ENCODE measurements at regions of chr6 and their contacts with region 1.

Region 1: GRCh38 chr6:42726485-42727086 is 4.2 kb upstream of the PRPH2 start:
- DNase-seq: peak; percentile 42 to 84
- ATAC-seq: peak; percentile 91 to 97 (median 95)
- H3K4me3 ChIP-seq: peak overlapping the region; percentile 3 to 66 (median 58)
- H3K27ac ChIP-seq: peak overlapping the region in 9 of 10 donors; percentile 34 to 88 (median 76)
- H3K4me1 ChIP-seq: peaks cover 4 to 20% (median 14%) of the 10 kb centered on the region in 9 donors
- H3K27me3 ChIP-seq: no peaks in the 10 kb centered on the region
- CTCF ChIP-seq: peak; percentile 82 to 98 (median 94)

Region 2: DNA sequence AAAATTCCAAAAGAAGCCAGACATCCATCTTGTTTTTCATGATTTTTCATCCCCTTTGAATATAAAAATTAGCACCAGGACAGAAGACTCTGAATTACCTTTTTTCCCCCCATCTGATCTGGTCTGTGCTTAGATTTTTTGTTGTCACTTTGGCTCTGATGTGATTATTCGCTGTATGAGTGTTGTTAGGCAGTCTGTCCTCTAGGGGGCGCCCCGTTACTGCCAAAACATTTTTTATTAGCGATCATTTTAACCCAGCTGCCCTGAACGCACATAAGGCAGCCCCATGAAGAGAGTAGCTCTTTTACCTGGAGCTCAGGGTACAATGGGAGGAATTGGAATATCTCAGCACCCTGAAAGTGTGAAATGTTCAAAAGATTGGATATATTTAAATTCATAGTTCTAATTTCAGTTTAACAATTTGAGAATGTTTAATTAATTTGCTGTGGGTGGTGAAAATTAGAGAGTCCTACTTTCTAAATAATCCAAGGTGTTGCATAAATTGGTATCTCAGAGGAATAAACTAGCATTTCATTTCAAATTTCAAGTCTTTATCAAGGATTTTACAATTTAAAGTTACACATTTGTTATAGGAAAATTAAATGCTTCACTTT is 64.9 kb before region 1 on chr6:
- intact Hi-C with region 1: loop called (anchors 1 to 10 kb)
- DNase-seq: peak; percentile 68 to 81
- ATAC-seq: peak in 7 of 8 donors; percentile 61 to 90 (median 82)
- H3K4me3 ChIP-seq: no peak overlapping the region
- H3K27ac ChIP-seq: no peak overlapping the region
- H3K4me1 ChIP-seq: no peaks in the 10 kb centered on the region
- H3K27me3 ChIP-seq: no peaks in the 10 kb centered on the region
- CTCF ChIP-seq: peak; percentile 81 to 95 (median 91)

Region 3: GRCh38 chr6:42692137-42692911 is 34.3 kb before region 1 on chr6:
- intact Hi-C with region 1: loop called in 2 of 10 experiments (anchors 5 kb)
- DNase-seq: no peak
- ATAC-seq: peak in 7 of 8 donors; percentile 35 to 68 (median 60)
- H3K4me3 ChIP-seq: no peak overlapping the region
- H3K27ac ChIP-seq: peak overlapping the region in 8 of 10 donors; percentile 16 to 66 (median 56)
- H3K4me1 ChIP-seq: peaks cover 0 to 50% (median 22%) of the 10 kb centered on the region in 9 donors
- H3K27me3 ChIP-seq: no peaks in the 10 kb centered on the region
- CTCF ChIP-seq: no peak

Region 4: GRCh38 chr6:42745707-42746462 is 19.3 kb after region 1 on chr6 and contains the start of gene TBCC:
- intact Hi-C with region 1: no loop called
- DNase-seq: peak; percentile 93 to 97
- ATAC-seq: peak; percentile 92 to 97 (median 94)
- H3K4me3 ChIP-seq: peak within 1 kb of the TSS; percentile 68 to 99 (median 96)
- H3K27ac ChIP-seq: peak within 1 kb of the TSS; percentile 84 to 98 (median 95)
- H3K4me1 ChIP-seq: peaks cover 5 to 38% (median 32%) of the 10 kb centered on the region in 9 donors
- H3K27me3 ChIP-seq: no peaks in the 10 kb centered on the region
- CTCF ChIP-seq: no peak
- total RNA-seq, gene TBCC: 9.8 to 16.1 (median 13.3) TPM

Region 5: GRCh38 chr6:42873313-42873712 is 146.7 kb after region 1 on chr6:
- intact Hi-C with region 1: loop called in 9 of 10 experiments (anchors 1 to 10 kb)
- DNase-seq: no peak
- ATAC-seq: no peak
- H3K4me3 ChIP-seq: no peak overlapping the region
- H3K27ac ChIP-seq: no peak overlapping the region
- H3K4me1 ChIP-seq: peaks cover 0 to 9% (median 0%) of the 10 kb centered on the region in 9 donors
- H3K27me3 ChIP-seq: no peaks in the 10 kb centered on the region
- CTCF ChIP-seq: no peak